ENCODE measurements at regions of chr10 and their contacts with region 1.

Region 1: DNA sequence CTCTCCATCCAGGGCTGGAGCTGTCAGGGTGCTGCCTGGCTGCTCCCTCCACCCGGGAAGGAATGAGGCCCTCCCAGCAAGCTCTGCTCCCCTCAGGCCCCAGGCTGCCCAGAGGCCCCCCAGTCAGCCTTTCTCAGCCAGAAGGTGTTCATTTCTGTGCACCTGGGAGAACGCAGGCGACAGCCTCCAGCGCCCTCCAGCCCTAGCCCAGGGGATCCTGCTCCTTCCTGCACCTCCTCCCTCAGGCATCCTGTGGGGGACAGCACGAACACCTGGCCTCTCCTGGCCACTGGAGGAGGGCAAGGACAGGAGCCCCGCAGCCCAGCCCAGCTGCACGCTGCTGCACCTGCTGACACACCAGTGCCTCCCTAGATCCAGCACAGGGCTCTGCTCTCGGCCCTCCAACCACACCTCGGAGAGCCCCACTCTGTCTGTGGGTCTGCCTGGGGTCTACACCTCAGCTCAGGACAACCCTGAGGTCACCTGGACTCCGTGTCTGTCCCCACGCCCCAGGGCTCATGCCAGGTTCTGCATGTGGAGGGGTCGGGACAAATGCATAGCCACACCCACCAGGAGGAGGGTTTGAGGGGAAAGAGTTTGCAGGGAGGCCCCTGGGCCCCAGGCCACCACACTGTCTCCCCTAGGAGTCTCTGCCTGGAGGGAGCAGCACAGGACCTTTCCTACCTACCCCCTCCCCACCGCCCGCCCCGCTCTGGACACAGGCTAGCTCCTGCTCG is 7.4 kb upstream of the PWWP2B start:
- DNase-seq: peak in 1 of 2 donors; percentile 49
- H3K4me3 ChIP-seq: peak overlapping the region in 1 of 3 donors; percentile 39
- H3K27ac ChIP-seq: peak overlapping the region in 1 of 2 donors; percentile 48
- H3K4me1 ChIP-seq: peaks cover 0 to 7% of the 10 kb centered on the region in 2 donors
- H3K27me3 ChIP-seq: no peaks in the 10 kb centered on the region
- CTCF ChIP-seq: no peak
- POLR2A ChIP-seq: no peak

Region 2: GRCh38 chr10:132407814-132408278 is 18.2 kb after region 1 on chr10:
- intact Hi-C with region 1: no loop called
- DNase-seq: peak; percentile 92 to 93
- H3K4me3 ChIP-seq: peak overlapping the region in 2 of 3 donors; percentile 43 to 61
- H3K27ac ChIP-seq: peak overlapping the region; percentile 94 to 97
- H3K4me1 ChIP-seq: peaks cover 2 to 32% of the 10 kb centered on the region in 2 donors
- H3K27me3 ChIP-seq: no peaks in the 10 kb centered on the region
- CTCF ChIP-seq: no peak
- POLR2A ChIP-seq: peak; percentile 35

Region 3: DNA sequence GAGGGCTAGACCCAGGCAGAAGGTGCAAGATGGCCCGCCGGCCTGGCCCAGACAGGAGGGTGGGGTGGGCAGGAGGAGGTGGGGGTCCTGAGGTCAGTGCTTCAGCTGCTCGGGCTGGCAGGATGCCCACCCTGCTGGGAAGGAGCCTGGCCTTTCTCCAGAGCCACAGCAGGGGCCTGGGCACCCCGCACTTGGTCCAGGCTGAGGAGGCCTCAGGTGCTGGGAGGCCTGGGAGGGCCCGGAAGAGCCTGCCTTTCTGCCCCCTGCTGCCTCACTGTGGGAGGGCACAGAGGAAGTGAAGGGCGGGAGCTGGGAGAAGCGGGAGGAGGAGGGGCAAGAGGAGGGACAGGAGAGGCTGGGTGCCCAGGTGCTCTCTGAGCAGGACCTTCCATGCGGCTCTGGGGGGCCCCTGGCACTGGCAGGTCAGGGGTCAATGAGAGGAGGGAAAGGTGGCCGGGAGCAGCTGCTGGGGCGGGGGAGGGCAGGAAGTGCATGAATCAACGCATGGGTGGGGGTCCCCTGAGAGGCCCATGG is 57.1 kb after region 1 on chr10:
- intact Hi-C with region 1: loop called (anchors 5 kb)
- DNase-seq: no peak
- H3K4me3 ChIP-seq: no peak overlapping the region
- H3K27ac ChIP-seq: peak overlapping the region; percentile 88 to 92
- H3K4me1 ChIP-seq: peaks cover 6 to 15% of the 10 kb centered on the region in 2 donors
- H3K27me3 ChIP-seq: no peaks in the 10 kb centered on the region
- CTCF ChIP-seq: peak; percentile 30 to 65 (median 40)
- POLR2A ChIP-seq: no peak